GM12878 (cell line): ENCODE measurements at regions of chr20 and their contacts with region 1.

Region 1: GRCh38 chr20:37095599-37096414 is at the start of gene RBL1:
- DNase-seq: peak; percentile 60
- ATAC-seq: peak; percentile 86
- H3K4me3 ChIP-seq: peak within 1 kb of the TSS; percentile 69
- H3K27ac ChIP-seq: peak within 1 kb of the TSS; percentile 96
- H3K4me1 ChIP-seq: peaks cover 16% of the 10 kb centered on the region
- H3K27me3 ChIP-seq: no peaks in the 10 kb centered on the region
- CTCF ChIP-seq: peak; percentile 4 to 13 (median 7); a peak in 1 of 6 replicates
- EP300 ChIP-seq: no peak
- POLR2A ChIP-seq: peak; percentile 96
- RAD21 ChIP-seq: no peak
- polyA plus RNA-seq, gene RBL1: 4.5 to 4.9 TPM

Region 2: GRCh38 chr20:37042986-37043972 is 52.5 kb before region 1 on chr20:
- CTCF ChIA-PET with region 1: interaction called, 6 read pairs
- POLR2A ChIA-PET with region 1: interaction called, 4 read pairs
- RAD21 ChIA-PET with region 1: interaction called, 4 read pairs
- SMC1A ChIA-PET with region 1: interaction called, 5 read pairs
- in situ Hi-C with region 1: no loop called
- intact Hi-C with region 1: loop called (anchors 5 kb)
- DNase-seq: peak; percentile 70
- ATAC-seq: peak; percentile 85
- H3K4me3 ChIP-seq: peak overlapping the region; percentile 58; the same call in 1 of the 2 replicates
- H3K27ac ChIP-seq: peak overlapping the region; percentile 87
- H3K4me1 ChIP-seq: peaks cover 18% of the 10 kb centered on the region
- H3K27me3 ChIP-seq: no peaks in the 10 kb centered on the region
- CTCF ChIP-seq: no peak
- EP300 ChIP-seq: no peak
- POLR2A ChIP-seq: 0 out of 2 replicates have a peak, but pooled peaks have one; percentile 17
- RAD21 ChIP-seq: no peak

Region 3: GRCh38 chr20:37081717-37082289 is 14.0 kb before region 1 on chr20:
- CTCF ChIA-PET with region 1: interaction called, 5 read pairs
- POLR2A ChIA-PET with region 1: interaction called, 10 read pairs
- RAD21 ChIA-PET with region 1: no interaction called
- SMC1A ChIA-PET with region 1: interaction called, 7 read pairs
- in situ Hi-C with region 1: no loop called
- intact Hi-C with region 1: no loop called
- DNase-seq: no peak
- ATAC-seq: peak; percentile 78
- H3K4me3 ChIP-seq: no peak overlapping the region
- H3K27ac ChIP-seq: no peak overlapping the region
- H3K4me1 ChIP-seq: no peaks in the 10 kb centered on the region
- H3K27me3 ChIP-seq: no peaks in the 10 kb centered on the region
- CTCF ChIP-seq: peak; percentile 43 to 65 (median 65)
- EP300 ChIP-seq: no peak
- POLR2A ChIP-seq: no peak
- RAD21 ChIP-seq: peak; percentile 56